Activated CD4-positive, alpha-beta T cell treated with anti-CD3 and anti-CD28 coated beads for 36 hours (primary cell): ENCODE measurements at regions of chr11 and their contacts with region 1.

Region 1: GRCh38 chr11:86041975-86042378 is 26.9 kb downstream of the PICALM start:
- DNase-seq: peak; percentile 63
- ATAC-seq: peak; percentile 70
- H3K4me3 Mint-ChIP-seq: peak overlapping the region; percentile 20
- H3K27ac Mint-ChIP-seq: peak overlapping the region; percentile 68
- H3K4me1 Mint-ChIP-seq: peaks cover 71% of the 10 kb centered on the region
- H3K27me3 Mint-ChIP-seq: no peaks in the 10 kb centered on the region

Region 2: GRCh38 chr11:86021377-86021776 is 20.6 kb before region 1 on chr11:
- CTCF ChIA-PET with region 1: interaction called, 13 read pairs
- POLR2A ChIA-PET with region 1: no interaction called
- intact Hi-C with region 1: no loop called
- DNase-seq: no peak
- ATAC-seq: peak; percentile 82
- H3K4me3 Mint-ChIP-seq: no peak overlapping the region
- H3K27ac Mint-ChIP-seq: peak overlapping the region; percentile 42
- H3K4me1 Mint-ChIP-seq: peaks cover 44% of the 10 kb centered on the region
- H3K27me3 Mint-ChIP-seq: no peaks in the 10 kb centered on the region

Region 3: GRCh38 chr11:86202013-86202336 is 160.0 kb after region 1 on chr11:
- CTCF ChIA-PET with region 1: interaction called, 16 read pairs
- POLR2A ChIA-PET with region 1: no interaction called
- intact Hi-C with region 1: no loop called
- DNase-seq: peak; percentile 39
- ATAC-seq: peak; percentile 94
- H3K4me3 Mint-ChIP-seq: no peak overlapping the region
- H3K27ac Mint-ChIP-seq: no peak overlapping the region
- H3K4me1 Mint-ChIP-seq: peaks cover 6% of the 10 kb centered on the region
- H3K27me3 Mint-ChIP-seq: peaks cover under 1% of the 10 kb centered on the region

Region 4: DNA sequence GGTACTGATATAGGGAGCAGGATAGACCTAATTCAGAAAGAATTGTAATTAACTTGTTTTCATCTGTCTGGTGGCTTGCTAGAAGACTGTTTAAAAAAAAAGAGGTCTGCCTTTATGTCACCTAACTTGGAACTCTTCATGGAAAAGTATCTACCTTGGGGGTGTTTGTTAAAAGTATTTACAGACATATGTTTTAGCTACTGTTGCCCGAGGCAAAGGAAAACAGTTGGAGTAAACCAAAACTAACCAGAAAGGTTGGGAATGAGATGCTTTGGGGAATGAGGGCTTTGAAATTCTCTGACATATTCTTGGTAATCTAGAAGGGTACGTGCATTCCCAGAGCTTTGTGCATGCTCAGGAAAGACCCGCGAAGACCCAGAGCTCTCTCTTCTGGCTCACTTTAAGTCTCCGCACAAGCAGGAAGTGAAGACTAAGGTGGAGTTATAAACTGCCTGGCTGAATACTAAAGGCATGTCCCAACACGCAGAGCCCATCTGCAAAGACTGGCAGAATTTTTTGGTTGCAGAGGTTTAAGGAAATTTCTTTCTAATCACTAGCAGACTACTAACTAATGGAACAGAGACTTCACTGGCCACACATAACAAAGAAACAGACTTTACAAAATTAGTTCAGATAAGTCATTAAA is 293.3 kb after region 1 on chr11:
- CTCF ChIA-PET with region 1: no interaction called
- POLR2A ChIA-PET with region 1: no interaction called
- intact Hi-C with region 1: no loop called
- DNase-seq: no peak
- ATAC-seq: no peak
- H3K4me3 Mint-ChIP-seq: no peak overlapping the region
- H3K27ac Mint-ChIP-seq: no peak overlapping the region
- H3K4me1 Mint-ChIP-seq: no peaks in the 10 kb centered on the region
- H3K27me3 Mint-ChIP-seq: no peaks in the 10 kb centered on the region